ENCODE measurements at regions of chr22 and their contacts with region 1.

Region 1: GRCh38 chr22:28951969-28952521 is 68.7 kb downstream of the ZNRF3 start:
- DNase-seq: peak; percentile 30
- ATAC-seq: peak; percentile 66
- H3K4me3 Mint-ChIP-seq: no peak overlapping the region
- H3K27ac Mint-ChIP-seq: 0 out of 2 replicates have a peak overlapping the region, but pooled peaks have one; percentile 8
- H3K4me1 Mint-ChIP-seq: peaks cover 56% of the 10 kb centered on the region
- H3K27me3 Mint-ChIP-seq: no peaks in the 10 kb centered on the region
- CTCF ChIP-seq: no peak

Region 2: GRCh38 chr22:28855355-28856094 is 96.5 kb before region 1 on chr22:
- CTCF ChIA-PET with region 1: interaction called, 11 read pairs
- POLR2A ChIA-PET with region 1: no interaction called
- DNase-seq: peak; percentile 51
- ATAC-seq: peak; percentile 73
- H3K4me3 Mint-ChIP-seq: no peak overlapping the region
- H3K27ac Mint-ChIP-seq: no peak overlapping the region
- H3K4me1 Mint-ChIP-seq: 0 out of 2 replicates have a peak, but pooled peaks cover 3% of the 10 kb centered on the region
- H3K27me3 Mint-ChIP-seq: no peaks in the 10 kb centered on the region
- CTCF ChIP-seq: peak; percentile 72

Region 3: DNA sequence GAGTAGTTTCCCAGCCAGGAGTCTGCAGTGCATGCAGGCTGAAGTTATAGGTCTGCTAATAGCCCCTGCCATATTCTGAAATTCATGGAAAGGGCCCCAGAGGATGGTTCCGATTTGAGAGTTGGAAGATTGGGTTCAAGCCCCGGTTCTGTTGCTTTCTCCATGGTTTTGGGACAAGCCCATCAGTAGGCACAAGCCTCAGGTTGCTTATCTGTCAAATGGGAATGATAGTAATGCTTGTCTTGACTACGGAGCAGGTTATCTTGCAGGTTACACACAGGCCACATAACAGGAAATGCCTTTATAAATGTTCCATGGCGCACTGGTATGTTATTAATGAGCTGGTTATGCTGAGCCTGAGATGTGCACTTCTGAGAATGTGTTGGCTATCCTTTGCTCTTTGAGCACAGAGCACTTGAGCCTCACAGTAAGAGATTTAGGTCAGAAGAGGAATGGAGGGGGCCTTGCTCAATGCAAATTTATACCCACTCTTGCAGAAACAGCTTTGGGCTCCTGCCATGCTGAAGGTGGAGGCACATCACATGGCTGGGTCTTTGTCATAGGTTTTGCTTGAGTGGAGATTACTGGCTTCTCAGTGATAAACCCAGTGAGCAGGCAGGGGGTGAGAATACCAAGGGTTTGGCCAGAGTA is 21.6 kb before region 1 on chr22:
- CTCF ChIA-PET with region 1: no interaction called
- POLR2A ChIA-PET with region 1: no interaction called
- DNase-seq: no peak
- ATAC-seq: no peak
- H3K4me3 Mint-ChIP-seq: no peak overlapping the region
- H3K27ac Mint-ChIP-seq: no peak overlapping the region
- H3K4me1 Mint-ChIP-seq: peaks cover 58% of the 10 kb centered on the region
- H3K27me3 Mint-ChIP-seq: no peaks in the 10 kb centered on the region
- CTCF ChIP-seq: no peak

Region 4: GRCh38 chr22:29093501-29094300 is 141.7 kb after region 1 on chr22:
- CTCF ChIA-PET with region 1: no interaction called
- POLR2A ChIA-PET with region 1: no interaction called
- DNase-seq: no peak
- ATAC-seq: no peak
- H3K4me3 Mint-ChIP-seq: no peak overlapping the region
- H3K27ac Mint-ChIP-seq: no peak overlapping the region
- H3K4me1 Mint-ChIP-seq: peaks cover 23% of the 10 kb centered on the region
- H3K27me3 Mint-ChIP-seq: no peaks in the 10 kb centered on the region
- CTCF ChIP-seq: no peak

Measured in WTC11 (cell line).